Body of pancreas (tissue), 4 donors: ENCODE measurements at regions of chr13 and their contacts with region 1.

Region 1: DNA sequence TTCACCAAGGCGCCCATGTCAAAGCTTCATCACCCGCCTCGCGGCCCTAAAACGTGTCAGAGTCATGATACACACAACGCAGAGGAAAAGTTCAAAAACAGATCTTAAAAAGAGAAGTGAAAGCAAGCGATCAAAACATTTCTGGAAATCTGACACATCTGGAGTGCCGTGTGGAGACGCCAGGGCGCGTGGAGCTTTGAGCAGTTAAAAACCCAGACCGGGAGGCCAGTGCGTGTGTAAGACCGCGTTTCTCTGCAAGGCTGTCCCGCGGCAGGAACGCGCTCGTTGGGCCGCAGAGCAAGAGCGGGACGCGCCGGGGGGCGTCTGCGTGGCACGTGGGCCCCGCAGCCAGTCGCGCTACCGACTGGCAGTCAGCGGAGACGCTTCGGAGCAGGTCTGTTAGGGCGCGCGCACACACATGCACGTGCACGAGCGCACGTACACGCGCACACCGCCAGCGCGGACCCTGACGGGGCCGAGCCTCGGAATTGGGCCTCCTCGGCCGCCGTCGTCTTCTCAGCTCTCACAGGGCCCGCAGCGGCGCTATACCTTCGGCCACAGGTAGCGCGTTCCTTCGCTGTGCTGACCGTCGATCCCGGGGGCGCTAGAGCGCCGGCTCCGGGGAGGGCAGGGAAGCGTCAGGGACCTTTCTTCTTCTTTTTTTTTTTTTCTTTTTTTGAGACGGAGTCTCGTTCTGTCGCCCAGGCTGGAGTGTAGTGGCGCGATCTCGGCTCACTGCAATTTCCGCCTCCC is 35.8 kb downstream of the RNF6 start:
- DNase-seq: peak; percentile 92 to 96 (median 93)
- ATAC-seq: peak; percentile 98
- H3K4me3 ChIP-seq: peak overlapping the region; percentile 21 to 59
- H3K27ac ChIP-seq: peak overlapping the region; percentile 64 to 89 (median 80)
- H3K4me1 ChIP-seq: peaks cover 24% of the 10 kb centered on the region
- H3K27me3 ChIP-seq: no peaks in the 10 kb centered on the region
- CTCF ChIP-seq: peak; percentile 27 to 98 (median 72)
- POLR2A ChIP-seq: peak; percentile 33 to 67 (median 61)

Region 2: DNA sequence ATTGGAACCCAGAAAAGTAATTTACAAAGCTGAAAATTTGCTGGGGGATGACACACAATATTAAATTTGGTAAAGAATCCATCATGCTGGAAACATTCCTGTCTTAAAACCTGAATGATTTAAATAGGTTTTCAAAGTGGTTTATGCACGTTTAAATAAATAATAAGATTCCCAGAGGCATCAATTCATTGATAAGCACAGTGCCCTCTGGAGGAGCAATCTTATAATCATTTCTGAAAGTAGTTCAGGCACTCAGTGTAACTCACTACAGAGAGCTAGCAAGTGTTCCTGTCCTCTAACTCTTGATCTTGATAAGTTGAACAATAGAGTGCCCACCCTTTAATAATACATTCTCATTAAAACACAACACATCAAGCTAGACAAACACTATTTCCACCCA is 91.0 kb before region 1 on chr13:
- intact Hi-C with region 1: no loop called
- DNase-seq: no peak
- ATAC-seq: no peak
- H3K4me3 ChIP-seq: no peak overlapping the region
- H3K27ac ChIP-seq: no peak overlapping the region
- H3K4me1 ChIP-seq: no peaks in the 10 kb centered on the region
- H3K27me3 ChIP-seq: peaks cover 0 to 3% of the 10 kb centered on the region in 2 donors
- CTCF ChIP-seq: no peak
- POLR2A ChIP-seq: no peak

Region 3: GRCh38 chr13:26280295-26280694 is 94.0 kb after region 1 on chr13:
- intact Hi-C with region 1: no loop called
- DNase-seq: no peak
- ATAC-seq: no peak
- H3K4me3 ChIP-seq: no peak overlapping the region
- H3K27ac ChIP-seq: no peak overlapping the region
- H3K4me1 ChIP-seq: peaks cover 8% of the 10 kb centered on the region
- H3K27me3 ChIP-seq: no peaks in the 10 kb centered on the region
- CTCF ChIP-seq: no peak
- POLR2A ChIP-seq: no peak

Region 4: DNA sequence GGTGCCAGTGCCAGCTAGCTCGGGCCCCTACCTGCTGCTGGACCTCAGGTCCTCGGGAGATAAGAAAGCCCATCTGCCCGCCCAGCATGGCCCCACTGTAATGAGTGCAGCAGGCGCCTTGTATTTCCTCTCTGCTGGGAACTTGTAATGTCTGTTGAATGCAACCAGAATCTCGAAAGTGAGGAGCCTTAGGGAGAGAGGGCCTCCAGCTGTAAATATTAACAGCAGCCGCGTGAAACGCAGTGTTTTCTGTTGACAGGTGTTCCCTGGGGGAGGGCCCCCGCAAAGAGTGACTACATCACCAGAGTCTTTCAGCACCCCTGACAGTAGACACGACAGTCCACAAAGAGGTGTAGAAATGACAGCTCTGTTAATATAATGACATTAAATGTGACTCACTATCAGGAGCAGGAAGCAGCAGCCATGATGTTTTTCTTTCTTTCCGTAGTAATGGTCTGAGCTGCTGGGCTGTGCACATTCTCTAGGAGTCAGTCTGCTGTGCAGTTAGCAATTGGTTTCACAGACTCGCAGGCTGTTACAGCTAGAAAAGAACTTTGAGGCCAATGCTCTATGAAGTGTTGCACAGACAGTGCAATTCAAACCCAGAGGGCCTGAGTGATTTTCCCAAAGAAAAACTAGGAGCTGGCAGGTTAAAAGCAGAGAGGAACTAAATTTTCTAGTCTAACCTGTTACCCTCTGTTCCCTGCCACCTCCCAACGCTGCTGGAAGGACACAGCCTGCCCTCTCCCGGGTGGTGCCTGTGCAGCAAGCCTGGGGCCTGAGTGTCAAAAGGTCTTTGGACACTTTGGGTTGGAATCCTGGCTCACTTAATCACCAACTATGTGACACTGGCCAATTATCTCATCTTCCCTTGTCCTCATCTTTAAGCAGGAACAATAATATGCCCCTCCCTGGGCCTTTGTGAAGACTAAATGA is 312.6 kb after region 1 on chr13:
- intact Hi-C with region 1: loop called (anchors 5 kb)
- DNase-seq: no peak
- ATAC-seq: no peak
- H3K4me3 ChIP-seq: no peak overlapping the region
- H3K27ac ChIP-seq: no peak overlapping the region
- H3K4me1 ChIP-seq: no peaks in the 10 kb centered on the region
- H3K27me3 ChIP-seq: no peaks in the 10 kb centered on the region
- CTCF ChIP-seq: no peak
- POLR2A ChIP-seq: no peak

Region 5: DNA sequence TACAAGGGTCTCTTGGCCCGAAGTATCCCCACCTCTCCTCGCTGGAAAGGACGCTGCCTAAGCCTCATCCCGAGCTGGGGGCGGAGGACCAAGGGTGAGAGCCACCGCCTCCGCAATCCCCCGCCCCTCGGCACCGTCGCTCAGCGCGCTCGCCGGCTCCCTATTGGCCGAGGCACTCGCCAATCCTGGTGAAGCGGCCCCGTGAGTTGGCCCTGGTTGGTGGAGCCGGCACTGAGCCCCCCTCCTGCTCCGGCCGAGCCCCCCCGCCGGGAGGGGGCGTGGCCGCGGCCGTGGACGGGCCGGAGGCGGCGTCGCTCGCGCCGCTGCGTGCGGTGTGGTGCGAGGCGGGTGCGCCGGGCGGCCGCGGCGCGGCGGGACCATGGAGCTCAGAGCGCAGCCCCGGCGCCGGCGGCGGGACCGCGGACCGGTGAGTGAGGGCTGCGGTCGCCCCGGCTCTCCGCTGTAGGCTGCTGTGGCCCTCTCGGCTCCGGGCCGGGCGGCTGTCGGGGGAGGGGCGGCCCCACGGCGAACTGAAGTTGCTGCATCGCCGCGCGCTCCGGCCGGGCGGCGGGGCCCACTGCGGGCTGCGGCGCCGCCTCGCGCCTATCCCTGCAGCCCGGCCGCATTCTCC is 371.2 kb after region 1 on chr13 and contains the start of gene WASF3:
- intact Hi-C with region 1: loop called (anchors 10 kb)
- DNase-seq: peak; percentile 95 to 96 (median 96)
- ATAC-seq: peak; percentile 97
- H3K4me3 ChIP-seq: peak within 1 kb of the TSS; percentile 54 to 85
- H3K27ac ChIP-seq: peak within 1 kb of the TSS; percentile 54 to 59 (median 56)
- H3K4me1 ChIP-seq: peaks cover 16% of the 10 kb centered on the region
- H3K27me3 ChIP-seq: no peaks in the 10 kb centered on the region
- CTCF ChIP-seq: no peak
- POLR2A ChIP-seq: peak in 2 of 3 donors; percentile 7 to 11
- total RNA-seq, gene WASF3: 6.0 to 13.2 TPM